Sigmoid colon (tissue), 7 donors: ENCODE measurements at regions of chr10 and their contacts with region 1.

Region 1: GRCh38 chr10:123582084-123582989 is 83.8 kb upstream of the GPR26 start:
- DNase-seq: peak; percentile 89
- H3K4me3 ChIP-seq: no peak overlapping the region
- H3K27ac ChIP-seq: no peak overlapping the region
- H3K4me1 ChIP-seq: peaks cover 0 to 25% (median 18%) of the 10 kb centered on the region in 4 donors
- H3K27me3 ChIP-seq: no peaks in the 10 kb centered on the region
- CTCF ChIP-seq: peak; percentile 72 to 85 (median 76)
- EP300 ChIP-seq: no peak
- POLR2A ChIP-seq: no peak

Region 2: GRCh38 chr10:123743976-123744411 is 161.7 kb after region 1 on chr10:
- intact Hi-C with region 1: loop called (anchors 5 kb)
- DNase-seq: no peak
- H3K4me3 ChIP-seq: no peak overlapping the region
- H3K27ac ChIP-seq: peak overlapping the region; percentile 6 to 59 (median 36)
- H3K4me1 ChIP-seq: peaks cover 0 to 53% (median 37%) of the 10 kb centered on the region in 4 donors
- H3K27me3 ChIP-seq: no peaks in the 10 kb centered on the region
- CTCF ChIP-seq: no peak
- EP300 ChIP-seq: no peak
- POLR2A ChIP-seq: no peak

Region 3: GRCh38 chr10:123897146-123897545 is 314.8 kb after region 1 on chr10:
- intact Hi-C with region 1: loop called (anchors 5 kb)
- DNase-seq: no peak
- H3K4me3 ChIP-seq: no peak overlapping the region
- H3K27ac ChIP-seq: peak overlapping the region; percentile 55 to 99 (median 98)
- H3K4me1 ChIP-seq: peaks cover 0 to 45% (median 37%) of the 10 kb centered on the region in 4 donors
- H3K27me3 ChIP-seq: no peaks in the 10 kb centered on the region
- CTCF ChIP-seq: no peak
- EP300 ChIP-seq: no peak
- POLR2A ChIP-seq: no peak